ENCODE measurements at regions of chr21 and their contacts with region 1.

Region 1: DNA sequence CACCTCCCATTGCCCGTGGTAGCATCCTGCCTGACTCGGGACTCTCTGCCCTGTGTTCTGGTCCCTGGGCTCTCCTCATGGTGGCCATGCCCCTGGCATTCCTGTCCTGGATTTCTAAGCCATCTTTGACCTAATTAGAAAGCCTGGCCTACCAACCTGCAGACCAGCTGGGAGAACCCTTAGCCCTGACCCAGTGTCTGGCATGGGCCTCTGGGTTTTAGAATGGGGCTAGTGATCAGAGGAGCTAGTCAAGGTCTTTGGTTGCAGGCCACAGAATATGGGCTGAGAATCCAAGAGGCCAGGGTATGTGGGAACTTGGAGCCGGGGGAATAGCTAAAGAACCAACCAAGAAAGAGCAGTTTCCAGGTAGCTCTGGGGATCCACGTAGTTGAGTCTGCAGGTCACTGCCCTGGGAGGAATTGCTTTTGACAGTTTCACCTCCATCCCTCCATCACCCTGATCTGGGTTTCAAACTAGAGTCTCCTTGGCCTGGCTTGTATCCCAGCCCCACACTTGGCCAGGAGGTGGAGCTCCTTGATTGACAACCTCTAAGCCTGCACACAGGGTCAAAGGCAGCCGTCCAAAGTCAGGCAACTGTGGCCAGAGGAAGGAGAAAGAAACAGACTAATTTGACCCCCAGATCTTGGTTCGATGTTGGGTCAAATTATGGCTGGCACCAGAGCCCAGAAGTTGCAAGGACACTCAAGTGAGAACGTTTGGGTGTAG is 54.7 kb upstream of the ABCG1 start:
- DNase-seq: peak; percentile 68 to 82 (median 75)
- ATAC-seq: peak; percentile 83 to 92 (median 88)
- H3K4me3 ChIP-seq: no peak overlapping the region
- H3K27ac ChIP-seq: peak overlapping the region in 2 of 12 donors; percentile 2 to 17
- H3K4me1 ChIP-seq: peaks cover 0 to 9% (median 0%) of the 10 kb centered on the region in 12 donors
- H3K27me3 ChIP-seq: peaks cover 0 to 4% (median 0%) of the 10 kb centered on the region in 9 donors
- CTCF ChIP-seq: peak; percentile 51 to 75 (median 64)
- POLR2A ChIP-seq: no peak

Region 2: GRCh38 chr21:41706678-41707077 is 457.5 kb before region 1 on chr21:
- intact Hi-C with region 1: no loop called
- DNase-seq: no peak
- ATAC-seq: no peak
- H3K4me3 ChIP-seq: no peak overlapping the region
- H3K27ac ChIP-seq: no peak overlapping the region
- H3K4me1 ChIP-seq: no peaks in the 10 kb centered on the region
- H3K27me3 ChIP-seq: peaks cover 0 to 24% (median 4%) of the 10 kb centered on the region in 9 donors
- CTCF ChIP-seq: no peak
- POLR2A ChIP-seq: no peak

Region 3: DNA sequence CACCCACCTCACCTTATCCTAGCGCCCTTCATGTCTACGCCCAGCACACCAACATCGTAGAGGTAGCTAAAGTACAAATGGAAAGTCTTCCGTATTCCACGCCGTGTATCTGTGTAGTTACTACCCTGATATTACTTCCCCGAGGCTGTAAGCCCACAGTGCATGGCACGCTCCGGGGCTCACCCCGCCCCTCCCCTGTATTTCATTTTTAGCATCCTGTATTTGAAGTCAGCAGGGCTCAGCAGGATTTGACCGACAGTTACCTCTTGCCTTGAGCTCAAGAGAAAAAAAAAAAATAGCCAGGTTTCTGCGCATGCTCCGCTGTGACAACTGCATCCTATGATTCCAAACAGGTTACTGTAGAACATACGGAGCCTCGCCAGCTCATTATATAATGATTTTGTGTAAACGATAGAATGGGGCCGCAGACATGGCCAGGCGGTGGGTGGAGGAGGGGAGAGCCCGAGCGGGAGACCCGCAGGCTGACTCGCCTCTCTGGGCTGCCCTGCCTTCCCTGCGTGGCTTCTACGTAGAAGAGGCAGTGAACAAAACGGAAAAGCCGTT is 56.0 kb after region 1 on chr21:
- intact Hi-C with region 1: loop called in 3 of 10 experiments (anchors 5 to 10 kb)
- DNase-seq: peak in 4 of 5 donors; percentile 56 to 74 (median 70)
- ATAC-seq: peak; percentile 70 to 86 (median 74)
- H3K4me3 ChIP-seq: peak overlapping the region; percentile 49 to 95 (median 78)
- H3K27ac ChIP-seq: peak overlapping the region; percentile 44 to 90 (median 83)
- H3K4me1 ChIP-seq: peaks cover 7 to 48% (median 28%) of the 10 kb centered on the region in 12 donors
- H3K27me3 ChIP-seq: no peaks in the 10 kb centered on the region
- CTCF ChIP-seq: no peak
- POLR2A ChIP-seq: no peak

Region 4: DNA sequence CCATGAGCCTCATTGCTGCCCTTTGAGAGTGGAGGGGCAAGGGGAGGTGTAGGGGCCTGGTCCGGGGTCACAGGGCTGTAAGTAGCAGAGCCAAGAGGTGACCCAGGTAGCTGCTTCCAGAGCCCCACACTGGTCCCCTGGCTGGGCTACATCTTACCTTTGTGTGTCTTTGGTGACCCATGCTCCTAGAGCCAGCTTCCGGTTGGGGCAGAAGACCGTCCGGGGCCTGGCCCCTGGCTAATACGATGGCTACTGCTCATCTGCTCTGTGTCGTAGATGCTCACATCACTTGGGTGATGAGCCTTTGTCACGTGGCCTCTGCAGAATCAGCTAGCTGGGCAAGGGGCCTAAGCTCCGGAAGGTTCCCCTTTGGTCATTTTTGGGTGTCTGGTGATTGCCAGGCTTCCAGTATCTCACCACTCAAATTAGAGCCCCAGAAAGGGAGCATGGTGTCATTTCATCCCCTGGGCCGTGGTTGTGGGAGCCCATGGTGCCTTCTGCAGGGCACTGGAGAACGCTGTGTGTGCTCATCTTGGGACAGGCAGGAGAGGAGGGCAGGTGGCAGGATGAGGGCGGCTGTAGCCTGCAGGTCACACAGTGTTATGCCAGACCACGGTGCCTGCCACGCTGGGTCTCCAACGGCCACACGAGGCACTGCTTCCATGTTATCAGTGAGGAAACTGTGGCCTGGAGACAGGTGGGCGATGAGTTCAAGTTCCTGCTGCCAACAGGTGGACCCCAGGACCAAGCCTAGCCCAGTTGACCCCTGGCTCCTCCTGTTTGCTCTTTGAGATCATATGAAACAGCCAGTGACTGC is 75.5 kb after region 1 on chr21:
- intact Hi-C with region 1: loop called in 1 of 10 experiments (anchors 5 kb)
- DNase-seq: peak in 1 of 5 donors; percentile 20
- ATAC-seq: no peak
- H3K4me3 ChIP-seq: no peak overlapping the region
- H3K27ac ChIP-seq: no peak overlapping the region
- H3K4me1 ChIP-seq: peaks cover 8 to 48% (median 34%) of the 10 kb centered on the region in 12 donors
- H3K27me3 ChIP-seq: no peaks in the 10 kb centered on the region
- CTCF ChIP-seq: no peak
- POLR2A ChIP-seq: no peak

Region 5: DNA sequence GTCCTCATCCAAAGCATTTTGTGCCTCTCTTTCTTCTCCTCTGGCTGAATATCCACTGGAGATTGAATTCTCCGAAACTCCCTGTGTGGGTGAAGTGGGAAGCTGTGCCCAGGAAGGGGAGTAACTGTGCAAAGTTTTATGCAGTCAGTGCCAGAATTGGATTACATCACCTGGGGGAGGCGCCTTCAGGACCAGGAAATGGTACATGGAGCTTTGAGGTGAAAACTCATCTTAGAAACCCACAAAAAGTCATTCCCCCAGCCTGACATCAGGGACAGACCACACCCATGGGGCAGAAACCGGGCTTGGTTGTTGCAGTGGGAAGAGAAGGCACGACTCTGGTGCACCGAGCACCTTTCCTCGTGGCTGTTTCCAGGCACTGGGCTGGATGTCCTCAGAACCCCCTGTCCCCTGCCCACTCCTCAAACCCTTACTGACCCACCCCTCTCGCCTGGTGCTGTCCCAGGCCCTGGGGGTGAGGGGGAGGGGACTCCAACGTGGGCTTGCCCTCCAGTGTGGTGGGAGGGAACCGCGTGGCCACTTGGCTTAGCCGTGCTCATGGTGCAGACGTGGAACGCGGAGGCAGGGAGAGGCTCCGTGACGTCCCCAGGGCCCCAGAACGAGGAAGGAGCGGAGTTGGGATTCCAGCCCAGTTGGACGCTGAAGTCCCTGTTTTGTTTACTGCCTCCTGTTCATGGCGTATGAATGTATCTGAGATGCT is 135.3 kb after region 1 on chr21:
- intact Hi-C with region 1: loop called in 2 of 10 experiments (anchors 5 to 10 kb)
- DNase-seq: peak in 4 of 5 donors; percentile 34 to 67 (median 49)
- ATAC-seq: peak in 3 of 4 donors; percentile 25 to 78 (median 41)
- H3K4me3 ChIP-seq: no peak overlapping the region
- H3K27ac ChIP-seq: peak overlapping the region in 11 of 12 donors; percentile 31 to 90 (median 62)
- H3K4me1 ChIP-seq: peaks cover 0 to 41% (median 19%) of the 10 kb centered on the region in 12 donors
- H3K27me3 ChIP-seq: no peaks in the 10 kb centered on the region
- CTCF ChIP-seq: no peak
- POLR2A ChIP-seq: no peak

Region 6: DNA sequence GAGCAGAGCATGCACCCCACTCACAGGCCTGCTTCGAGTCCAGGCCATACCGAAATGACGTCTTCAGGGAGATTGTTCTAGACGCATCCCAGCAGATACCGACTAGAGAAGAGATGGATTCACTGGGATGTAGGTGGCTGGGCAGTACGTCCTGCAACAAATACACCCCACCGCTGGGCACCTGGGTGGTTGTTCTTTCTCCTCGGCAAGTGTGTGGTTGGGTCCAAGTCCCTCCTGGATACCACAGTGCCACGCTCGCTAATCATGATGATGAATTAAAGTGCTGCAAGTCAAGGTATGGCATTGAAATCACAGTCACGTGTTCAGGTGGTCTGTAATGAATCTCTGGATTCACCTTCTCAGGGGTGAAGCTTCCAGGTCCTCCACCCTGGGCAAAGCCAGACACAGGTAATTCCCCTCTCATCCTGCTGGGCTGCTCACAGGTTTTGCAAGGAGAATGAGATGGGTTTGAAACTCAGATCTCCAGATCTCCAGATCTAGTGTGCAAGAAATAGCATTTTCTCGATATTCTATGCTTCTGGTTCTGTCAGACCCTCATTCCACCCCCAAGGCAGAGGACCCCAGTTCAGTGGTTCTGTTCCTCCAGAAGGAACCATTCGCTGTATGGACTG is 285.2 kb after region 1 on chr21:
- intact Hi-C with region 1: loop called in 6 of 10 experiments (anchors 1 to 5 kb)
- DNase-seq: no peak
- ATAC-seq: peak in 1 of 4 donors; percentile 25
- H3K4me3 ChIP-seq: no peak overlapping the region
- H3K27ac ChIP-seq: no peak overlapping the region
- H3K4me1 ChIP-seq: peaks cover 0 to 6% (median 0%) of the 10 kb centered on the region in 12 donors
- H3K27me3 ChIP-seq: peaks cover 0 to 9% (median 0%) of the 10 kb centered on the region in 9 donors
- CTCF ChIP-seq: no peak
- POLR2A ChIP-seq: no peak

Measured in heart left ventricle (tissue), 16 donors.